CD8-positive, alpha-beta T cell (primary cell): ENCODE measurements at regions of chr5 and their contacts with region 1.

Region 1: GRCh38 chr5:180718810-180719453 is 20.9 kb downstream of the OR2Y1 start:
- DNase-seq: peak; percentile 12 to 72 (median 34)
- ATAC-seq: no peak
- H3K4me3 ChIP-seq: no peak overlapping the region
- H3K4me3 Mint-ChIP-seq: no peak overlapping the region
- H3K27ac ChIP-seq: no peak overlapping the region
- H3K27ac Mint-ChIP-seq: peak overlapping the region; percentile 41
- H3K4me1 ChIP-seq: peaks cover 12% of the 10 kb centered on the region
- H3K4me1 Mint-ChIP-seq: peaks cover 23% of the 10 kb centered on the region
- H3K27me3 ChIP-seq: no peaks in the 10 kb centered on the region
- H3K27me3 Mint-ChIP-seq: peaks cover 2% of the 10 kb centered on the region
- CTCF ChIP-seq: peak; percentile 72

Region 2: DNA sequence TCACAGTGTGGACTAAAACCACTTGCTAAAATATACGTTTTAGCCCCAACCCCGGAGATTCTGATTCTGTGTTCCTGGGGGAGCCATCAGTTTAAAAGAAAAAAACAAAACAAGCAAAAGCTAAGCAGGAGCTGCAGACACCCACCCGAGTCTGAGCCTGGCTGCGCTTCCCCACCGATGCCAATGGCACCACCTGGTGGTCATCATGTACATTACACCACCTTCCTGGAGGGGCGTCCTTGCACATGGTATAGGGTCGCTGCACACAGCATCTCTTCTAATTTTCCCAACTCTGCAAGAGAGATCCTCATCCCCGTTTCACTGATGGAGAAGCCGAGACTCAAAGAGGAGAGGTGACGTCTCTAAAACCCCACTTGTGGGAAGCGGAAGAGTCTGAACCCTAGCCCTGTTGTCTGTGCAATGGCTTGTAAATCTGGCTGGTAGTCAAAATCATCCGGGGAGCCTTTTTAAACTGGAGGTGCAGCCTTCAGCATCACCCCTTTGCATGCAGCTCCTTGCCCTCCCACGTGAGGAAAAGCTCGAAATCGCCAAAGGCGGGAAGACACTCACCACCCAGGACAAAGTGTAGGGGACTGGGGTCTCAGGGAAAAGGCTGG is 247.9 kb before region 1 on chr5:
- CTCF ChIA-PET with region 1: interaction called, 3 read pairs
- POLR2A ChIA-PET with region 1: no interaction called
- intact Hi-C with region 1: loop called in 1 of 2 experiments (anchors 5 kb)
- DNase-seq: peak; percentile 16 to 80 (median 61)
- ATAC-seq: peak; percentile 94
- H3K4me3 ChIP-seq: no peak overlapping the region
- H3K4me3 Mint-ChIP-seq: no peak overlapping the region
- H3K27ac ChIP-seq: no peak overlapping the region
- H3K27ac Mint-ChIP-seq: no peak overlapping the region
- H3K4me1 ChIP-seq: no peaks in the 10 kb centered on the region
- H3K4me1 Mint-ChIP-seq: no peaks in the 10 kb centered on the region
- H3K27me3 ChIP-seq: no peaks in the 10 kb centered on the region
- H3K27me3 Mint-ChIP-seq: peaks cover 2% of the 10 kb centered on the region
- CTCF ChIP-seq: peak; percentile 86

Region 3: DNA sequence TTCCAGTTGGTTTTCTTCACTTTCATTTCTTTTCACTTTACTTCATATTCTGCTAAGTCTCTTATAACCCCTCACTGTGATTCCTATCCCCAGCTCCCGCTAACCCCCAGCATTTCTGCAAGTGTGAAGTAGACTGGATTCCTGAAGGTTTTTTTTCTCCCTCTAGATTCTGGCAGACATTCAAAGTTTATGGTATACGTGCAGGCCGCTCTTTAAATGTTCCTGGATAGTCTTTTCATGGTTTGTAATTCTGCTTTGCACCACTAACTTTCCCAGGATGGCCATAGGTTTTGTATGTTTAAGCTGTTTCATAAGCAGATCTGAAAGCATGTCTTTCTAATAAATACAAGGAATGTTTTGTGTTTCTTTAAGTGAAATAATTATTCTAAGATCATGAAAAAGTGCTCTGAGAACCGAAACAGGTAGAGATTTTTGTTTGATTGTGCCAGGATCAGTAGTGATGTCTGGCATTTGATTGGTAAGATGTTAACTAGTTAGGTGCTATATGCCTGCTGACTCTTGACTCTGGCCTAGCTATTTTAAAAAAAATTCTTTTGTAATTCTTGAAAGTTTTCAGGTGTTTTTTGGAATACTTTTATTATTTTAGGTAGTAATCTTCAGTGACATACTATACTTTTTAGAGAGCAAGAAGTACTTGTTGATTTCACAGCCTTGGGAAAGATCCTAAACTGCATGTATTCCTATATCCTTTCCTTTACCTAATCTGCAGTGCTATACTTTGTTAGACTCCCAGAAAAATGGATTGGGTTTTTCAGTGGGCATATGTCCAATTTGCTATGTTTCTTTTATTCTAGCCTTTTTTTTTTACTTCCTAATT is 195.1 kb before region 1 on chr5:
- CTCF ChIA-PET with region 1: interaction called, 5 read pairs
- POLR2A ChIA-PET with region 1: no interaction called
- intact Hi-C with region 1: loop called in 1 of 2 experiments (anchors 5 kb)
- DNase-seq: no peak
- ATAC-seq: no peak
- H3K4me3 ChIP-seq: no peak overlapping the region
- H3K4me3 Mint-ChIP-seq: no peak overlapping the region
- H3K27ac ChIP-seq: no peak overlapping the region
- H3K27ac Mint-ChIP-seq: peak overlapping the region; percentile 19
- H3K4me1 ChIP-seq: peaks cover 22% of the 10 kb centered on the region
- H3K4me1 Mint-ChIP-seq: peaks cover 65% of the 10 kb centered on the region
- H3K27me3 ChIP-seq: no peaks in the 10 kb centered on the region
- H3K27me3 Mint-ChIP-seq: no peaks in the 10 kb centered on the region
- CTCF ChIP-seq: no peak

Region 4: DNA sequence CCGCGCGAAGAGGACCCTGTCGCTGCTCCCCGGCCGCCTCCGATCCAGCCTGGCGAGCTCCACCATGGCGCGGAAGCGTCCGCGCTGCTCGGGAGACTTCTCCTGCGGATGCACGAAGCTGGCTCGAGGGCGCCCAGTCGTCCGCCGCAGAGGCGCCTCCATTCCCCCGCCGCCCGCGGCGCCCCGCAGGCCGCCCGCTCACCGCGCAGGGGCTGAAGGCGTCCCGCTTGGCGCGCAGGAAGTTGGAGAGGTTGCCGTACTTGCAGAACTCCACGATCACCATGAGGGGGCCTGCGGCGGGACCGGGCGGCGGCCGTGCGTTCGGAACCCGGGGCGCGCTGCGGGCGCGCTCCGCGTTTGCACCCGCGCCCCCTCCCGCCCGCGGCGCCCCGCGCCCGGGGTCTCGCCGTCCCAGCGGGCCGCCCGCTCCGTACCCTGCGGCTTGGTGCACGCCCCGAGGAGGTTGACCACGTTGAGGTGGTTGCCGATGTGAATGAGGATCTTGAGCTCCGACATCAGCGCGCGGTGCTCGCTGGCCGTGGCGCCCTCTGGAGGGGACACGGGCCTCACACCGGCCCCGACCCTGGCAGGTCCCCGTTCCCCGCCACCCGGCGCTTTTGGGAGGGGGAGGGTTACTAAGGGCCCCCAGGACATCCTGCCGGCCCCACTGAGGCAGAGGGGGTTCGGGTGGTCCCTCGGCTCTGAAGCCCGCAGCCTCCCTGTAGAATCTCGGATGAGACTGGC is 99.9 kb before region 1 on chr5:
- CTCF ChIA-PET with region 1: interaction called, 3 read pairs
- POLR2A ChIA-PET with region 1: no interaction called
- intact Hi-C with region 1: loop called in 1 of 2 experiments (anchors 1 kb)
- DNase-seq: peak in 8 of 9 experiments; percentile 11 to 55 (median 37)
- ATAC-seq: peak; percentile 69
- H3K4me3 ChIP-seq: peak overlapping the region in 1 of 2 experiments; percentile 33
- H3K4me3 Mint-ChIP-seq: no peak overlapping the region
- H3K27ac ChIP-seq: no peak overlapping the region
- H3K27ac Mint-ChIP-seq: no peak overlapping the region
- H3K4me1 ChIP-seq: peaks cover 16% of the 10 kb centered on the region
- H3K4me1 Mint-ChIP-seq: peaks cover 14% of the 10 kb centered on the region
- H3K27me3 ChIP-seq: no peaks in the 10 kb centered on the region
- H3K27me3 Mint-ChIP-seq: no peaks in the 10 kb centered on the region
- CTCF ChIP-seq: no peak

Region 5: GRCh38 chr5:180683220-180683922 is 35.6 kb before region 1 on chr5:
- CTCF ChIA-PET with region 1: interaction called, 54 read pairs
- POLR2A ChIA-PET with region 1: interaction called, 3 read pairs
- intact Hi-C with region 1: loop called in 1 of 2 experiments (anchors 1 kb)
- DNase-seq: peak in 1 of 9 experiments; percentile 29
- ATAC-seq: no peak
- H3K4me3 ChIP-seq: no peak overlapping the region
- H3K4me3 Mint-ChIP-seq: no peak overlapping the region
- H3K27ac ChIP-seq: peak overlapping the region in 1 of 2 experiments; percentile 22
- H3K27ac Mint-ChIP-seq: peak overlapping the region; percentile 77
- H3K4me1 ChIP-seq: peaks cover 55% of the 10 kb centered on the region
- H3K4me1 Mint-ChIP-seq: peaks cover 50% of the 10 kb centered on the region
- H3K27me3 ChIP-seq: no peaks in the 10 kb centered on the region
- H3K27me3 Mint-ChIP-seq: no peaks in the 10 kb centered on the region
- CTCF ChIP-seq: no peak

Region 6: DNA sequence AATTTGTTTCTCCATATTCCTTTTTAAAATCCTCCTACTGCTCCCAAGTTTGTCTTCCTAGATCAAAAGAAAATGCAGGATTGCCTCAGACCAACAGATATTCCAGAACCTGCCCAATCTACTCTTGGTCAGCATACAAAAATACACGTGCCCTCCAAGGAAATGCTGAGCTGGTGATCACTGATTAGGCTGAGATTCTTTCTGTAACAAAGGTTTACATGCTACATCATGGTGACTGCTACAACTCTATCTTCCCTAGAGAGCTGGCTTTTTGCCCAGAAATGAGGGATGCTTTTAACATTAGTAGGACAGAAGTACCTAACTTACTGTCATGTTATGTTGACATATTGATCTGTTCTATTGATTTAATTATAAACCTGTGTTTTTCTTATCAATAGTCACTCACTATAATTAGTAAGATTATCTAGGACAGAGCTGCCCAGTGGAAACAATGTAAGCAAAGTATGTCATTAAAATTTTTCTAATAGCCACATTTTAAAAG is 14.5 kb before region 1 on chr5:
- CTCF ChIA-PET with region 1: interaction called, 16 read pairs
- POLR2A ChIA-PET with region 1: no interaction called
- intact Hi-C with region 1: no loop called
- DNase-seq: no peak
- ATAC-seq: no peak
- H3K4me3 ChIP-seq: no peak overlapping the region
- H3K4me3 Mint-ChIP-seq: no peak overlapping the region
- H3K27ac ChIP-seq: no peak overlapping the region
- H3K27ac Mint-ChIP-seq: no peak overlapping the region
- H3K4me1 ChIP-seq: no peaks in the 10 kb centered on the region
- H3K4me1 Mint-ChIP-seq: peaks cover 9% of the 10 kb centered on the region
- H3K27me3 ChIP-seq: no peaks in the 10 kb centered on the region
- H3K27me3 Mint-ChIP-seq: no peaks in the 10 kb centered on the region
- CTCF ChIP-seq: no peak